ENCODE measurements at regions of chr12 and their contacts with region 1.

Region 1: GRCh38 chr12:6341417-6342139 is at the start of gene TNFRSF1A:
- DNase-seq: peak; percentile 83
- H3K4me3 Mint-ChIP-seq: no peak within 1 kb of the TSS
- H3K27ac Mint-ChIP-seq: no peak within 1 kb of the TSS
- H3K4me1 Mint-ChIP-seq: peaks cover 40% of the 10 kb centered on the region
- H3K27me3 Mint-ChIP-seq: no peaks in the 10 kb centered on the region
- total RNA-seq, gene TNFRSF1A: 52.7 and 54.4 TPM in 2 replicates

Region 2: GRCh38 chr12:6323340-6323994 is 18.1 kb before region 1 on chr12:
- intact Hi-C with region 1: no loop called
- DNase-seq: peak; percentile 81
- H3K4me3 Mint-ChIP-seq: peak overlapping the region; percentile 62
- H3K27ac Mint-ChIP-seq: peak overlapping the region; percentile 85
- H3K4me1 Mint-ChIP-seq: peaks cover 33% of the 10 kb centered on the region
- H3K27me3 Mint-ChIP-seq: no peaks in the 10 kb centered on the region

Region 3: GRCh38 chr12:6363611-6364328 is 22.2 kb after region 1 on chr12:
- intact Hi-C with region 1: loop called (anchors 1 kb)
- DNase-seq: peak; percentile 77
- H3K4me3 Mint-ChIP-seq: peak overlapping the region; percentile 77
- H3K27ac Mint-ChIP-seq: peak overlapping the region; percentile 81
- H3K4me1 Mint-ChIP-seq: peaks cover 27% of the 10 kb centered on the region
- H3K27me3 Mint-ChIP-seq: no peaks in the 10 kb centered on the region